K562 (cell line): ENCODE measurements at regions of chr3 and their contacts with region 1.

Region 1: DNA sequence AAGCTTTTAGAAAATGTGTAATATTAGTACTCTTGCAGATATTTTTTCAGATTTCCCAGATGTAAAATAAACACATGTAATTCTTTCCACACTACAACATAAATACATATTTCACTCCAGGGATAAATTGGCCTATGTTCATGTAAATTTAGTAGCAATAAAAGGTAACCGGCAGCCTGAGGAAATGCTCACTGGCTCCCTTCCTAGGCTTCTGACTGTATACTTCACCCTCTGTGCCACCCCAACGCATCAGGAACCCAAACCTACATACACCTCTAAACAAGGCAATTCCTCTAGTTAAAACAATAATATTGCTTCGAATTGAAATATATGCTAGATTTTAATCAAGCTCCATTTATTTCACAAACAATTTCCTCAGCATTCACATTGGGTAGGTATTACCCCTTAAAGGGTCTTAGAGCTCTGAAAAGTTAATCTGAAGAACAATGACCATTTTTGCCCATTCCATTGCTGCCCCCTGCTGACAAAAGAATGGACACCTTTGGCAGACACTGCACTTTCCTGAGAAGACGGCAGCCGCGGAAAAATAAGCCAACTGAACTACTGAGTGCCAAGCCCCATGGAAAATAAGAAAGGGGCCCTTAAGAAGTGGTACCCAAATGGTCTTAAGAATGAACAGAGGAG is 212.5 kb downstream of the OSBPL10 start:
- DNase-seq: peak; percentile 18 to 77 (median 28)
- ATAC-seq: peak; percentile 90
- H3K4me3 ChIP-seq: no peak overlapping the region
- H3K27ac ChIP-seq: no peak overlapping the region
- H3K4me1 ChIP-seq: no peaks in the 10 kb centered on the region; a peak in 1 of 5 replicates
- H3K27me3 ChIP-seq: 0 out of 5 replicates have a peak, but pooled peaks cover 0 to 3% of the 10 kb centered on the region in 2 experiments
- CTCF ChIP-seq: peak; percentile 69 to 77 (median 71)
- EP300 ChIP-seq: no peak
- POLR2A ChIP-seq: no peak
- RAD21 ChIP-seq: peak; percentile 88 to 90

Region 2: GRCh38 chr3:30012941-30013543 is 1755.6 kb before region 1 on chr3:
- CTCF ChIA-PET with region 1: no interaction called
- POLR2A ChIA-PET with region 1: no interaction called
- in situ Hi-C with region 1: no loop called
- intact Hi-C with region 1: loop called (anchors 5 kb)
- DNase-seq: peak; percentile 31 to 63 (median 35)
- ATAC-seq: peak; percentile 70; the same call in 2 of the 3 replicates
- H3K4me3 ChIP-seq: no peak overlapping the region
- H3K27ac ChIP-seq: no peak overlapping the region
- H3K4me1 ChIP-seq: no peaks in the 10 kb centered on the region
- H3K27me3 ChIP-seq: no peaks in the 10 kb centered on the region
- CTCF ChIP-seq: peak in 2 of 3 experiments; percentile 55 to 57; a peak in 5 of 6 replicates
- EP300 ChIP-seq: no peak
- POLR2A ChIP-seq: no peak
- RAD21 ChIP-seq: peak; percentile 68 to 80

Region 3: GRCh38 chr3:30768703-30769685 is 999.6 kb before region 1 on chr3:
- CTCF ChIA-PET with region 1: interaction called, 8 read pairs
- POLR2A ChIA-PET with region 1: no interaction called
- in situ Hi-C with region 1: no loop called
- intact Hi-C with region 1: loop called (anchors 2 kb)
- DNase-seq: peak; percentile 34 to 72 (median 46)
- ATAC-seq: peak; percentile 67
- H3K4me3 ChIP-seq: no peak overlapping the region
- H3K27ac ChIP-seq: no peak overlapping the region
- H3K4me1 ChIP-seq: no peaks in the 10 kb centered on the region
- H3K27me3 ChIP-seq: no peaks in the 10 kb centered on the region
- CTCF ChIP-seq: peak; percentile 47 to 68 (median 68)
- EP300 ChIP-seq: no peak
- POLR2A ChIP-seq: no peak
- RAD21 ChIP-seq: peak; percentile 78 to 81

Region 4: GRCh38 chr3:30779686-30780287 is 988.8 kb before region 1 on chr3:
- CTCF ChIA-PET with region 1: interaction called, 3 read pairs
- POLR2A ChIA-PET with region 1: no interaction called
- in situ Hi-C with region 1: loop called (anchors 25 kb)
- intact Hi-C with region 1: no loop called
- DNase-seq: peak in 2 of 4 experiments; percentile 8 to 28
- ATAC-seq: no peak
- H3K4me3 ChIP-seq: no peak overlapping the region
- H3K27ac ChIP-seq: no peak overlapping the region
- H3K4me1 ChIP-seq: no peaks in the 10 kb centered on the region
- H3K27me3 ChIP-seq: no peaks in the 10 kb centered on the region
- CTCF ChIP-seq: peak in 2 of 3 experiments; percentile 16 to 38; a peak in 2 of 6 replicates
- EP300 ChIP-seq: no peak
- POLR2A ChIP-seq: no peak
- RAD21 ChIP-seq: peak; percentile 59 to 70

Region 5: GRCh38 chr3:31219131-31219843 is 549.3 kb before region 1 on chr3:
- CTCF ChIA-PET with region 1: no interaction called
- POLR2A ChIA-PET with region 1: no interaction called
- in situ Hi-C with region 1: no loop called
- intact Hi-C with region 1: loop called (anchors 10 kb)
- DNase-seq: no peak
- ATAC-seq: no peak
- H3K4me3 ChIP-seq: no peak overlapping the region
- H3K27ac ChIP-seq: no peak overlapping the region
- H3K4me1 ChIP-seq: no peaks in the 10 kb centered on the region
- H3K27me3 ChIP-seq: no peaks in the 10 kb centered on the region
- CTCF ChIP-seq: no peak
- EP300 ChIP-seq: no peak
- POLR2A ChIP-seq: no peak
- RAD21 ChIP-seq: no peak

Region 6: GRCh38 chr3:31456373-31456772 is 312.2 kb before region 1 on chr3:
- CTCF ChIA-PET with region 1: no interaction called
- POLR2A ChIA-PET with region 1: no interaction called
- in situ Hi-C with region 1: no loop called
- intact Hi-C with region 1: loop called (anchors 10 kb)
- DNase-seq: peak in 1 of 4 experiments; percentile 19
- ATAC-seq: no peak
- H3K4me3 ChIP-seq: no peak overlapping the region
- H3K27ac ChIP-seq: no peak overlapping the region
- H3K4me1 ChIP-seq: peaks cover 3 to 9% of the 10 kb centered on the region in 2 experiments; a peak in 3 of 5 replicates
- H3K27me3 ChIP-seq: peaks cover 16 to 21% of the 10 kb centered on the region in 2 experiments
- CTCF ChIP-seq: no peak
- EP300 ChIP-seq: no peak
- POLR2A ChIP-seq: no peak
- RAD21 ChIP-seq: no peak

Region 7: DNA sequence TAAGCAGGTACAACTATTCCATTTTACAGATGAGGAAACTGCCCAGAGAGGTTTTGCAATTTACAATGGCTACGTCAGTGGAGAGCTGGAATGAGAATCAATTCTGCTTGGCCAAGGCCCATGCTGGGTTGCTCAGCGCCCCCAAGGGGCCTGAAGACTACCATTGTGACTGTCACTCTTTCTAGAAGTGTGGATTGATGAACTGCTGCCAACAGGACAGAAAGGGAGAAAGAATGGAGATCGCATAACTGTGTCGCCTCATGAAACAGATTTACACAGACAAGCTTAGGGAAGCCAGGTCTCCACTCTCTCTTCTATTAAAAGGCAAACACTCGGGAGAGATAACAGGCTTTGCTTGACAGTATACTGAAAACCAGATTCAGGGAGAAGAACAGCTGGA is 75.9 kb before region 1 on chr3:
- CTCF ChIA-PET with region 1: no interaction called
- POLR2A ChIA-PET with region 1: no interaction called
- in situ Hi-C with region 1: no loop called
- intact Hi-C with region 1: no loop called
- DNase-seq: peak in 1 of 4 experiments; percentile 29
- ATAC-seq: peak; percentile 92
- H3K4me3 ChIP-seq: no peak overlapping the region
- H3K27ac ChIP-seq: no peak overlapping the region
- H3K4me1 ChIP-seq: no peaks in the 10 kb centered on the region
- H3K27me3 ChIP-seq: no peaks in the 10 kb centered on the region; a peak in 1 of 5 replicates
- CTCF ChIP-seq: peak; percentile 34 to 51 (median 42); a peak in 4 of 6 replicates
- EP300 ChIP-seq: no peak
- POLR2A ChIP-seq: no peak
- RAD21 ChIP-seq: peak in 1 of 2 experiments; percentile 66; a peak in 3 of 4 replicates

Region 8: GRCh38 chr3:31710123-31710803 is 58.3 kb before region 1 on chr3:
- CTCF ChIA-PET with region 1: no interaction called
- POLR2A ChIA-PET with region 1: no interaction called
- in situ Hi-C with region 1: no loop called
- intact Hi-C with region 1: no loop called
- DNase-seq: no peak
- ATAC-seq: no peak
- H3K4me3 ChIP-seq: no peak overlapping the region
- H3K27ac ChIP-seq: no peak overlapping the region
- H3K4me1 ChIP-seq: no peaks in the 10 kb centered on the region
- H3K27me3 ChIP-seq: peaks cover 3 to 14% of the 10 kb centered on the region in 2 experiments; a peak in 4 of 5 replicates
- CTCF ChIP-seq: no peak
- EP300 ChIP-seq: no peak
- POLR2A ChIP-seq: no peak
- RAD21 ChIP-seq: no peak